GM13976 (cell line): ENCODE measurements at regions of chr2 and their contacts with region 1.

Region 1: DNA sequence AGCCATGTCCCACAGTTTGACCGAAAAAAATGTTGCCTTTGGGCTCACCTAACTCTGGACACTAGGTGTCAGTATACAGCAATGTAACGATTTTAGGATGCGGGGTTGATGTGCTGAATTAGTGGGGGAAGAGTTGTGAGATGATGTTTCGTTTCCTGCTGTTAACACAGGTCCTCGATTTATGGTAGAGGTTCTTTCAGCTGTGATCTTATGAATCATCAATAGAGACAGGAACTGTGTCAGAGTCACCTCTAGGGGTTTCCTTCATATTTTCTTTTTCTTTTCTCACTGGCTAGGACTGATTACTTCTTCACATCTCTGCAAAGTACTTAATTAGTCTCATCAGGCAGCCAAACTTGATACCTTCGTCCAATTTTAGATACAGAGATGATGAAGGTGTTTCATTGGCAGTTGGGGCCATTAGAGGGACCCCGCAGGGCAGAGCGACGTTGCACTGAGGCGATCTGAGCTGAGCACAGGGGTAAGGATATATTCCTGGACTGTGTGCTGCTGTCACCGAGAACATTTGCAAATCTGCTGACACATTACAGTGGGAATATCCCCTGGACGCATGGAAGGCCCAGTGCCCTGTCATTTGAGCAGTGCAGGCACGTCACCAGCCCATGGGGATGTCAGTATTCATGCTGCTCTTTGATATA is 10.2 kb upstream of the MMADHC start:
- DNase-seq: peak; percentile 39
- CTCF ChIP-seq: peak; percentile 81

Region 2: DNA sequence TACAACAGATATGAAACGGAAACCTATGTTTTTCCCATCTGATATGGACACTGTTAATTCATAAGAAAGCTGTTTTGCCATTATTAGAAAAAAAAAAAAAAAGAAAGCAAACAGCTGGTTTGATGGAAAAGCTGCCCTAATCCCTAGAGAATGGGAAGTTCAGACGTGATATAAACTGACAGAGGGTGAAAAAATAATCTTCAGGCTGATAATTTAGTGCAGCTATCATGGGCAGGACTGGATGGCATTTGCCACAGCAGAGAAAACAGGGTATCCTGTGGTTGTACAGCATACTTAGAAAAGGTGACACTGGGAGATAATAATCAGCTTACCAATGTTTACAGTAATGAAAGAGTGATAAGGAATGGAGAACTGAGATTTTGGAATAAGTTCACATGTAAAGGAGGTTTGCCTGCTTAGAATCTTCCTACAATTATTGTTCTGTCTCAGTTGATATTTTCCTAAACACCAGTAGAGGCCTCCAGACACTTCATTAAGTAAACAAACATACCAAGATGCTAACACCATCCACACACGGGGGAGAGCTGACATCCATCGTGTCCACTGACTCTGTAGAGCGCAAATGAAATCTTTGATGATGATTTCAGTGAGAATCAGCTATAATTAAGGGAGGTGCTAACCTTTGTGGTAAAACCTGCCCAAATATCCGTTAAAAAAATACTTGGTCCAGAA is 201.4 kb after region 1 on chr2:
- in situ Hi-C with region 1: no loop called
- DNase-seq: no peak
- CTCF ChIP-seq: no peak

Region 3: DNA sequence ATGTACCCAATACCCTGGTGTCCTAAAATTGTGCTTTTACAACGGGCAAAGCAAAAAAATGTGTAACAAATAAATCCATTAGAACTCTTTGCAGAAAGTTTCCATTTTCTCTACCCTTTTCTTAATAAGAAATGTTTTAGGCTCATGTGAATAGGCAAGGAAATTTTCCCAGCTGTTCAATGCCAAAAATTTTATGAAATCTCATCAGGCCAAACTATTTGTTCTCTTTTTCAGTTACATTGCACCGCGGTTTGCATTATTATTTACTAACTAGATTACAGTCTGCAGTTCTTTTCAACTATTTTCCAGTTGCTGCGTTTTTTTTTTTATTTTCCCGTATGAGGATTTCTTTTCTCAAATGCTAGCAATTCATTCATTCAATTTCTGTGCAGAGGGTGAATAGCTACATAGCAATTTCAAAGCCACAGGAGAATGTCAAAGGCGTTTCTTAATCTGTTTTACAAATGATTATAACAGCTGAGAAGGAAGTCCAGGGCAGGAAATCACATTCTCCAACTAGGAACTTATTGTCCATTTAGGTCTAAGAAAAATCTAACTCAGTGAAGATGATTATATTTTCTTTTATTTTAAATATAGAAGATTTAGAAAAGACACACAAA is 357.3 kb after region 1 on chr2:
- in situ Hi-C with region 1: no loop called
- DNase-seq: no peak
- CTCF ChIP-seq: no peak

Region 4: GRCh38 chr2:150487537-150488429 is 890.0 kb after region 1 on chr2 and contains the start of gene RND3:
- in situ Hi-C with region 1: loop called (anchors 10 kb)
- DNase-seq: peak; percentile 66
- CTCF ChIP-seq: peak; percentile 68

Region 5: DNA sequence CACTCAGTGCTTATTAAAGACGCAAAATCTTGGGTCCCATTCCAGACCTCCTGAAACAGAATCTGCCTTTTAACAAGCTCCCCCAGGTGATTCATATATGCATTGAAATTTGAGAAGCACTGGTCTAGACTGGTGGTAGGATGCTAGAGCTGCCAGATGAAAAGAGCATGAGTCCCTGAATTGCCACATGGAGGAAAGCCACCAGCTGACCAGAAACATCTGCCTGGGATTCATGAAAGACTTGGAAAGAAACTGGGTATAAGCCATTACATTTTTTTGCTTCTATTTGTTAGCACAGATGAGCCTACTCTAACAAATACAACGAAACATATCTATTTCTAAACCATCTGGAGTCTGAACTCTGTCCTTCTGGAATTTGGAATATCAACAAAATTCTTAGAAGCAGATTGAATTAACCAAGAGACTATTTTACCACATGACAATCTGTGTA is 1435.0 kb after region 1 on chr2:
- in situ Hi-C with region 1: loop called (anchors 25 kb)
- DNase-seq: no peak
- CTCF ChIP-seq: no peak

Region 6: GRCh38 chr2:151238527-151239487 is 1641.0 kb after region 1 on chr2:
- in situ Hi-C with region 1: loop called (anchors 25 kb)
- DNase-seq: peak; percentile 59
- CTCF ChIP-seq: peak; percentile 37